ENCODE measurements at regions of chr10 and their contacts with region 1.

Region 1: GRCh38 chr10:77004917-77005564 is 632.6 kb downstream of the KCNMA1 start:
- DNase-seq: no peak
- H3K4me3 ChIP-seq: no peak overlapping the region
- H3K27ac ChIP-seq: peak overlapping the region; percentile 24 to 46
- H3K4me1 ChIP-seq: peaks cover 0 to 2% of the 10 kb centered on the region in 2 donors
- H3K27me3 ChIP-seq: no peaks in the 10 kb centered on the region
- CTCF ChIP-seq: peak; percentile 71 to 82 (median 76)

Region 2: DNA sequence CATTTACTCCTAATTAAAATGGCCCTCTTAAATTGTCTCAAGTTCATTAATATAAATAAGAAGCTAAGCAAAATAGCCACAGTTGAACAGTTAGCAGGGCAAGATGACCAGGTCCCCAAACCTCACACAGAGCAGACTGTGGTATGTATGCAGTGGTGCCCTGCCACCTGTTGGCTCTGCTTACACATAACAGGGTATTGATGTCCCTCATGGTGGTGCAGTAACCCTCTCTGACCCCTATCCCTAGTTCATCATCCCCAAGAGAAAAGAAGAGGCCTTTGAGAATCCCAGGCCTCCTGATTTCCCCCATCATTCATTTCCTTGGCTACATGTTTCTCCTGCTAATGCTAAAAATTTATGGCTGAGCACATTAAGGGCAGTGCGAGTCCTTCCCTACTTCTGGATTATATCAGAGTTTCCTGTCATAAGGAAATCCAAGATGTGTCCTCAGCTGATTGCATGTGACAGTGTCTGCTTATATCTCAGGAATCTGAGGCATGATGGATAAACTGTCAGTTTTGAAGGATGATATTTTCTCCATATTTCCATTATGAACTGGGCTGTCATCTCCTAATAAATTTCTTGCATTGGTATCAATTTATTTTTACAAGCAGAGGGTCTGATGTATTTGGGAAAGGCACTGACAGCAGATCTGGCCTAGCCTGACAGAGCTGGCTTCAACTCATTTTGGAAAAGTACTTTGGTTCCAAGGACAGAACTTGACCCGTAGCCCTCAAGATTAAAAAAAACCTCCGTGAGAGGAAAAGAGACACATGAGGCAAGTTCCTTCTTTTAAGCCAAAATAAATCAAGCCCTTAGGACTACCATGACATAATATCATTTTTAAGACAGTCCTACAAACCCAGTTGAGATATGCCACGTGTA is 693.0 kb before region 1 on chr10:
- intact Hi-C with region 1: loop called (anchors 10 kb)
- DNase-seq: no peak
- H3K4me3 ChIP-seq: no peak overlapping the region
- H3K27ac ChIP-seq: peak overlapping the region; percentile 72
- H3K4me1 ChIP-seq: peaks cover 5 to 30% of the 10 kb centered on the region in 2 donors
- H3K27me3 ChIP-seq: no peaks in the 10 kb centered on the region
- CTCF ChIP-seq: peak in 2 of 3 experiments; percentile 22 to 30

Measured in ascending aorta (tissue), 2 donors.